Activated CD4-positive, alpha-beta memory T cell treated with anti-CD3 and anti-CD28 coated beads, Interleukin-2, amount 10 ng/mL, durations not matched to agents 7 days and 5 days (primary cell): ENCODE measurements at regions of chr3 and their contacts with region 1.

Region 1: GRCh38 chr3:128879125-128879969 is at the start of gene ACAD9:
- DNase-seq: peak; percentile 98
- H3K4me3 Mint-ChIP-seq: peak within 1 kb of the TSS; percentile 85
- H3K27ac Mint-ChIP-seq: peak within 1 kb of the TSS; percentile 86
- H3K4me1 Mint-ChIP-seq: peaks cover 64% of the 10 kb centered on the region
- H3K27me3 Mint-ChIP-seq: peaks cover 3% of the 10 kb centered on the region
- total RNA-seq, gene ACAD9: 42.7 to 48.4 TPM

Region 2: GRCh38 chr3:128650096-128651050 is 229.0 kb before region 1 on chr3 and contains the start of gene RPN1:
- CTCF ChIA-PET with region 1: interaction called, 6 read pairs
- POLR2A ChIA-PET with region 1: interaction called, 30 read pairs
- DNase-seq: peak; percentile 96
- H3K4me3 Mint-ChIP-seq: peak within 1 kb of the TSS; percentile 85
- H3K27ac Mint-ChIP-seq: peak within 1 kb of the TSS; percentile 88
- H3K4me1 Mint-ChIP-seq: peaks cover 47% of the 10 kb centered on the region
- H3K27me3 Mint-ChIP-seq: no peaks in the 10 kb centered on the region
- total RNA-seq, gene RPN1: 190 to 192 TPM

Region 3: DNA sequence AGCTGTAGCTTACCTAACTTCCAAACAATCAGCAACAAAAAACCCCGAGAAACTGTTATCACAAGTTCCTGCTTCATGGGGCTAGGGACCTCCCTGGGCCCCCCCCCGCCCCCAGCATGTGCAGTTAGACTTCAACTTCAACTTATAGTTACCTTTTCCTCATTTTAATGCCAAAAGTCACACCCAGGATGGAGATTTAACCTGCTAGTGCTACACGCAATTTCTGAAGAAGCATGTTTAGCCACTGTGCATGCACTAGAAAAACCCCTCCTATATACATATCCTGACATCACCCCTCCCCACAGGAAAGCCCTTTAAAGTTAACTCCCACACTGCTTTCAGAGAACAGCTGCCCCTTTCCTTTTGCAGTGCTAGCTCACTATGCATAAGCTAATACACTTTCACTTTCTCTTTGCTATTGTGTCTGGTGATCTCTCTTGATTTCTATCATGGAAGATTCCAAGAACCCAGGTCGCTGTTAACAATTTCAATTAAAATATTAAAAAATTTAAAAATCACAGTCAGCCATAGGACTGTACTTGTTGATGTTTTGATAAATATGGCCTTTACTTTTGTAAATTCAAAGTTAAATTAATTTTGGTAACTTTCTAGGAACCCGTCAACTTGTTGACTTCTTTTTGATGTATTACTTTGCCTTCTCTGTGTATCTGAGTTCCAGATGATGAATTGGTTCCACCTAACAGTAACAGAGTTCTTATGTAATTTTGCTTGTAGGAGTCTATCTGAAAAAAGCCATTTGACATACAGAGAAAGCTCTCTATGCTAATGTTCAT is 75.1 kb before region 1 on chr3:
- CTCF ChIA-PET with region 1: no interaction called
- POLR2A ChIA-PET with region 1: interaction called, 11 read pairs
- DNase-seq: peak; percentile 70
- H3K4me3 Mint-ChIP-seq: peak overlapping the region; percentile 70
- H3K27ac Mint-ChIP-seq: peak overlapping the region; percentile 93
- H3K4me1 Mint-ChIP-seq: peaks cover 69% of the 10 kb centered on the region
- H3K27me3 Mint-ChIP-seq: no peaks in the 10 kb centered on the region

Region 4: GRCh38 chr3:128867200-128868125 is 11.9 kb before region 1 on chr3:
- CTCF ChIA-PET with region 1: interaction called, 6 read pairs
- POLR2A ChIA-PET with region 1: interaction called, 19 read pairs
- DNase-seq: no peak
- H3K4me3 Mint-ChIP-seq: no peak overlapping the region
- H3K27ac Mint-ChIP-seq: no peak overlapping the region
- H3K4me1 Mint-ChIP-seq: peaks cover 2% of the 10 kb centered on the region
- H3K27me3 Mint-ChIP-seq: no peaks in the 10 kb centered on the region

Region 5: DNA sequence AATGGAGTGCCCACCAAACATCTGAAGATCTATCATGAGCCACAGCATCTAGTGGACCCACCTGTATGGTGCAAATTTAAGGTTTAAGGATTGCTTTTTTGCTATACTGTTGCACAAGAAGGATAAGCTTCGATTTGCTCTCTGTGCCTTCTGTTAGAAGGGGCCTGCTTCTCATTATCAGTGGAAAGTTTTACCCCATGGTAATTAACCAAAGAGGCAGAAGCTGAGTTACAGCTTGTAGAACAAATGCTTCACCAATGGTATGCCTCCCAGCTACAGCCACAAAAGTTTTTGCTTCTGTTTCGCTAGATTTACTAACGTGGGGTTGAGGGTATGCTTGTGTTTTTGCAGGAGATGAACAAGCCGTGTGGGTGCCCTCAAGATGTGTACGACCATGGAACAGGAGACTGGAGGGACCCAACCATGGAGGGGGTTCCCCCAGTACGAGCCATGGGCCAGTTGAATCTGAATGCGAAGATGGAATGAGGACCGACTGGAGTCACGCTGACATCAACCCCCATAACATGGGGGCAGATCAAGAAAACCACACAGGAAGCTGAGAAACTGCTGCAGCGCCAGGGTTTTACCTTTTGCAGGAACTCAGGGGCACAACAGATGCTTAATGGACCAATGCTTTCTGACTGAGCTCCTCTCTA is 43.6 kb after region 1 on chr3:
- CTCF ChIA-PET with region 1: interaction called, 33 read pairs
- POLR2A ChIA-PET with region 1: interaction called, 11 read pairs
- DNase-seq: peak; percentile 57
- H3K4me3 Mint-ChIP-seq: peak overlapping the region; percentile 43
- H3K27ac Mint-ChIP-seq: peak overlapping the region; percentile 33
- H3K4me1 Mint-ChIP-seq: peaks cover 27% of the 10 kb centered on the region
- H3K27me3 Mint-ChIP-seq: peaks cover 19% of the 10 kb centered on the region

Region 6: DNA sequence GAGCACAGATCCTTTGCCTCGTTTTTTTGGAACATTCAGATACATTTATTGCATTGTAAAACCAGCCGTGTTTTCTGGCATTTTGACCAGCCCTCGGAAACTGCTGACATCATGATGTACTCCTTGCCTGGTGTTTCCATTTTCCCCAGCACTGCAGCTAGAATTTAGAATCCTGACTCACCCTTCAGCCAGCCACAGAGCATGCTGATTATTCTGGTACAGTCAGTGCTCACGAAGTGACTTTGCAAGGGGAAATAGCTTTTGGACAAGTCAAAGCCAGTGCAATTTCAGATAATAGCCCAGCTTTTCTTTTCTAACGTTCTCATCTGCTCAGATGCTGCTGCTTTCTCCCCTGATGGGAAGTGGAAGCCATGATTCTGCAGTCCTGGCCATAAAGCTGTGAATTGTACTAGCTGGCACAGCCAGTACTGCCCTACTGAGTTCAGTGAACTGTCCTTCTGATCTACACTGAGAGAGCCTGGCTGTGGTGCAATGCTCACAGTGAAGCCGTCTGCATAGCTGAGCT is 316.4 kb after region 1 on chr3:
- CTCF ChIA-PET with region 1: no interaction called
- POLR2A ChIA-PET with region 1: no interaction called
- DNase-seq: no peak
- H3K4me3 Mint-ChIP-seq: no peak overlapping the region
- H3K27ac Mint-ChIP-seq: no peak overlapping the region
- H3K4me1 Mint-ChIP-seq: peaks cover 18% of the 10 kb centered on the region
- H3K27me3 Mint-ChIP-seq: no peaks in the 10 kb centered on the region